Right ventricle myocardium inferior (tissue), 1 donor: ENCODE measurements at regions of chr1 and their contacts with region 1.

Region 1: DNA sequence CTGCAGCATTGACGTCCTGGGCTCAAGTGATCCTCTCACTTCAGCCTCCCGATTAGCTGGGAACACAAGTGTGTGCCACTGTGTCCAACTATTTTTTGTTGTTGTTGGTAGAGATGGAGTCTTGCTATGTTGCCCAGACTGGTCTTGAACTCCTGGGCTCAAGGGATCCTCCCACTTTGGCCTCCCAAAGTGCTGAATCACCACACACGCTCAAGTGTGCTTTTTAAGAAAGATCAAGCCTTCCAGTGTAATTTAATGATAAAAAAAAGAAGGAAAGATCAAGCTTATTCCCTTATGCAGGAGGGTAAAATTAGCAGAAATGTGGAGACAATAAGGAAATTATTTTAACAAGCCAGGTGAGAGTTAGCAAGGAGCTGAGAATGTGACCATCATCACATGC is 61.1 kb upstream of the SERBP1 start:
- DNase-seq: no peak
- ATAC-seq: no peak

Region 2: DNA sequence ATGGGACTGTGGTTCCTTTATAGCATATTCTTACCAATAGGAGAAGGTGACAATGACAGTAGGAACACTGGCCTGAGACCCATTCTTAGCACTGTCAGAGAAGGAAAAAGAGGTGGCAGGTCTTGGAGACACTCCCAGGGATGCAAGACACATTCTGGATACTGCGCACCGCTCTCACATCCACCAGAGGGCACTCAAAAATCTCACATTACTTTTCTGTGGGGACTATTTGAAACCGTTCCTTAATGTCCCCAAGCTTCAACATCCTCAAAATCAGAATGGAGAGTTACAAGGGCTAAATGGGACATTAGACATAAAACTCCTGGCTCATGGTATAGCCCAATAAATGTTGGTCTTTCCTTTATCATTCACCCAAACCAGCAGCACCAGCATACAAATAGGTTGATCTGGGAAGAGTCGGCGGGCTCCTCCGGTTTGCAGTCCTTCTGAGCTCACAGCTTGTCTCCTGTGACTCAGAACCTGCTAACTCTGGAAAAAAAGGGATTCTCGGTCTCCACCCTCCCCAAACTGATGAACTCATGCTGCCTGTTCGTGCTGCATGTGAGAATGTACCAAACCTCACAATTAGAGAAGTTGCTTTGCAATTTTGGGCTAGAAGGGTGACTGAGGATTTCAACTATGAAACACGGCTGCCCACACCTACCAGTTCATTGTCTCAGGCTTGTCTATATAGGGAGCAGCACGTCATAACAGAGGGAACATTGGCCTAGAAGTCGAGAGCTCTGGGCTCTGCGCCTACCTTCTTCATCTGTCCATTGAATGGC is 143.4 kb before region 1 on chr1:
- intact Hi-C with region 1: loop called (anchors 1 kb)
- DNase-seq: no peak
- ATAC-seq: peak; percentile 65